ENCODE measurements at regions of chr1 and their contacts with region 1.

Region 1: GRCh38 chr1:222465211-222466041 is 82.5 kb downstream of the HHIPL2 start:
- H3K4me3 Mint-ChIP-seq: peak overlapping the region; percentile 75
- H3K27ac Mint-ChIP-seq: peak overlapping the region; percentile 96
- H3K4me1 Mint-ChIP-seq: peaks cover 9% of the 10 kb centered on the region
- H3K27me3 Mint-ChIP-seq: no peaks in the 10 kb centered on the region

Region 2: DNA sequence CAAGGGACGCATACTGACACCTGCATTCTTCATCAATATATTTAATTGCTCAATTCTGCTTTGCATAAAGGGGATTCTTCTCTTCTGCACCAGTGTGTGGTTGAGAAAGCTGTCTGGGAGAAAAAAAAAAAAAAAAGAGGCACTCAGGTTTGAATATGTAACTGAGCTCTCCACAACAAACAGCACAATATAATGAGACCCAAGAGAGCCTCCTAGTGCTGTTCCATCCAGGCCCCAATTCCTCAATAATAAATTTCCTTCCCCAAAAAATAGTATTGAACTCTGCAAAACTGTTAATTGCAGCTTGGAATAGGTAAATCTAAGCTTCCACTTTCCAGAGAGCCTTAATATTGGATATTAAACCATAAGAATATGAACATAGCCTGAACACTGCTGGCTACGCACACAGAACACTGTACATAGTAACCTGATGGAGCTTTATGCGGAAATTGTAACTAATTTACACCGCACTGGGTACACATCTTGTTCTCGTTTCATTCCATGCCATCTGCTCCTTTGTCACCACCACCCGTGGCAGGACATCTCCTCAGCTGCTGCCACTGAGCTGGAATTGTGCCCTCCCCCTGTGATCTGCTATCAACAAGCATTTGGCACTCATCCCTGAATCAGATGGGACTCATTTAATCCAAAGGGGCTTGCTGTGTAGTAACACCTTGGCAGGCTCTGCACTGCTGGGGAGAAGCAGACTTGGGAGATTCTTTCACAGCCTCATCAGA is 189.5 kb before region 1 on chr1:
- intact Hi-C with region 1: no loop called
- H3K4me3 Mint-ChIP-seq: no peak overlapping the region
- H3K27ac Mint-ChIP-seq: no peak overlapping the region
- H3K4me1 Mint-ChIP-seq: no peaks in the 10 kb centered on the region
- H3K27me3 Mint-ChIP-seq: no peaks in the 10 kb centered on the region

Region 3: DNA sequence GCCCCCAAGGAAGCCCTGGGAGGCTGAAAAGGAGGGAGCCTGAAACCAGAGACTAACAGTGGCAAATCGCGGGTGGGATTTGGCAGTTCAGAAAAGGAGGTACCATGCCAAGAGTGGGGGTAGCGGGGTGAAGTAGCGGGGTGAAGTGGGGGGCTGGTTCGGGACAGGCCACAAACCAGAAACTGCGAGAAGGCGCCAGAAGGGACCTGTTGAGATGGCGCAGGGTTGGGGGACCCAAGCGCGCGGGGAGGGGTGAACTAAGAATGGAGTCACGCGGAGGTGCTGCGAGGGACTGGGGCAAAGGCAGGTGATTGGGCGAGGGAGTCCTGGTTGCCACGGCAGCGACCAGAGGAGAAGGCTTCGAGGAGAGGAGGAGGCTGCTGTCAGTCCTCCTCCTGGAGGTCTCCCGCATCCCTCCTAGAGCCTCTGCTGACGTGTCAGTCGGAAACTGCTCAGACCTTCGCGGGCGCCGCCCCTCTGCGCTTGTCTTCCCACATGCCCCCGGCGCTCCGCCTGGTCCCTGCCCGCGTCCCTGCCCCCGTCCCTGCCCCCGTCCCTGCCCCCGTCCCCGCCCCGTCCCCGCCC is 152.0 kb after region 1 on chr1:
- intact Hi-C with region 1: loop called (anchors 1 kb)
- H3K4me3 Mint-ChIP-seq: peak overlapping the region; percentile 83
- H3K27ac Mint-ChIP-seq: peak overlapping the region; percentile 76
- H3K4me1 Mint-ChIP-seq: peaks cover 26% of the 10 kb centered on the region
- H3K27me3 Mint-ChIP-seq: peaks cover 22% of the 10 kb centered on the region

Region 4: DNA sequence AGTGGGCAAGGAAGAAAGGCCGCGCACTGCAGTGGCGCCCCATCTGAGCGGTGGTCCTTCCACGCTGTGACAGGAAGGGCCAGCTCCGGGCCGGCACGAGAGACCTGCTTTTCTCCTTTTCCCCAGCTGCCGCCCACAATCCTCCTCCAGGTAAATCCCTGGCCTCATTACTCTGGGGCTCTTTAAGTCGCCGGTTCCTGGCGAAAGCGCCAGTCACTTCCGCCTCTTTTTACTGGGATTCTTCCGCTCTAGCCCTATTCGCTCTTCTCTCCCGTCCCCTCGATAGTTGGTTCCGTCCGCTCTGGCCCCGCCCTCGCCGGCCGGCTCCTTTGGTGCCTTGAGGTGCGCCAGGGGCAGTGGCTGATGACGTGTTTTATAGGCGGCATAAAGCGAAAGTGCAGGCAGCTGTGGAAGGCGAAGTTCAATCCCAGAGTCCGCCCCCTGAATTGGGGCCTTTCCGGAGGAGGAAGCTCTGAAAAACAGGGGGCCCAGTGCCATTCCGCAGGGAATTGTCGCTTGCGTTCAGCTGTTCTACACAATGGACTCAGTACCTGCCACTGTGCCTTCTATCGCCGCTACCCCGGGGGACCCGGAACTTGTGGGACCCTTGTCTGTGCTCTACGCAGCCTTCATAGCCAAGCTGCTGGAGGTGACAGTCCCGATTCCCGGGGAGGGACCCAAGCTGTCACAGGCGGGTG is 178.7 kb after region 1 on chr1:
- intact Hi-C with region 1: loop called (anchors 1 kb)
- H3K4me3 Mint-ChIP-seq: peak overlapping the region; percentile 100
- H3K27ac Mint-ChIP-seq: peak overlapping the region; percentile 98
- H3K4me1 Mint-ChIP-seq: peaks cover 7% of the 10 kb centered on the region
- H3K27me3 Mint-ChIP-seq: no peaks in the 10 kb centered on the region

Region 5: GRCh38 chr1:222814536-222815439 is 349.4 kb after region 1 on chr1 and contains the start of gene DISP1:
- intact Hi-C with region 1: loop called (anchors 10 kb)
- H3K4me3 Mint-ChIP-seq: peak within 1 kb of the TSS; percentile 89
- H3K27ac Mint-ChIP-seq: peak within 1 kb of the TSS; percentile 89
- H3K4me1 Mint-ChIP-seq: peaks cover 26% of the 10 kb centered on the region
- H3K27me3 Mint-ChIP-seq: no peaks in the 10 kb centered on the region

Region 6: DNA sequence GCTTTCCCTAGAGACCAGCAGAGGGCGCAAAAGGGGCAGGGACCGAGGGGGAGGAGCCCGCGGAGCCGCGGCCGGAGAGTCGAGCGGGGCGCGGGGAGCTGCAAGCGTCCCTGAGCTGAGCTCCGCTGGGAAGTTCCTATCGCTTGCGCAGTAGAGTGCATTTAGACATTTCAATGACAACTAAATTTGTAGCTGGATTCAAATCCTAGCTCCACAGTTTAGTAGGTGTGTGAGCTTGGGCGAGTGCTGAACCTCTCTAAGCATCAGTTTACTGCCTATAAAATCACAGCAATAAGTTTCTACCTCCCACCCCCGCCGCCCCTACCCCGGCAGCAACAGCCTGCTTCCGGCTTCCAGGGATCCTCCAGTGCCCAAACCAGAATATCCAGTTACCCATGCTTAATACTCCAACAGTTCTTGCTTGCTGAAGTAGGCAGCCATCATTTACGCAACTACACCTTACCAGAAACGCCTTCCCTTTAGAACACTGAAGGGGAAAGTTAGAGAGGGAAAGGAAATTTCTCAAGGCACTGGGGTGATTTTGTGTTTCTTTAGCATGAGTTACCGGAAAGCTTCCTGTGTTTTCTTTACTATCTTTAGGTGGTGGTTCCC is 668.5 kb after region 1 on chr1:
- intact Hi-C with region 1: loop called (anchors 10 kb)
- H3K4me3 Mint-ChIP-seq: peak overlapping the region; percentile 56
- H3K27ac Mint-ChIP-seq: peak overlapping the region; percentile 24
- H3K4me1 Mint-ChIP-seq: peaks cover 51% of the 10 kb centered on the region
- H3K27me3 Mint-ChIP-seq: peaks cover 2% of the 10 kb centered on the region